ENCODE measurements at regions of chr2 and their contacts with region 1.

Region 1: GRCh38 chr2:99559075-99559662 is 69.4 kb upstream of the REV1 start:
- DNase-seq: peak; percentile 57
- ATAC-seq: peak; percentile 96
- H3K4me3 ChIP-seq: no peak overlapping the region
- H3K27ac ChIP-seq: no peak overlapping the region
- H3K4me1 ChIP-seq: no peaks in the 10 kb centered on the region
- H3K27me3 ChIP-seq: peaks cover 19% of the 10 kb centered on the region
- CTCF ChIP-seq: peak; percentile 97

Region 2: DNA sequence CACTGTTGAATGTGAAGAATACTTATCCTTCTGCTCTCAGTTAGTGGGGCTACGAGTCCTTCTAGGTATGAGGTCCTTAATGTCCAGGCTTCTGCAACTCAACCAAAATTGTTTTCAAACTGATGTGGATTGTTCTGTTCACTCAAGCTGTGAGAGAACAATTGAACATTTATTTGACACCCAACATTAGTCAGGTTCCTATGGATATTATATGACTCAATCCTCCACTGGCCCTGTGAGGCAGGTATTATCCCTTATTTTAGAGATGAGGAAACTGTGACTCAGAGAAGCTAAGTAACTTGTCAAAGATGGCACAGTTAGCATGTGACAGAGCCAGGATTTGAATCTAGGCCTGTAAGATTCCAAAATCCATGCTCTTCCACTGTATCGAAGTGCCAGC is 302.5 kb before region 1 on chr2:
- CTCF ChIA-PET with region 1: no interaction called
- POLR2A ChIA-PET with region 1: no interaction called
- in situ Hi-C with region 1: no loop called
- intact Hi-C with region 1: no loop called
- DNase-seq: no peak
- ATAC-seq: no peak
- H3K4me3 ChIP-seq: no peak overlapping the region
- H3K27ac ChIP-seq: no peak overlapping the region
- H3K4me1 ChIP-seq: no peaks in the 10 kb centered on the region
- H3K27me3 ChIP-seq: no peaks in the 10 kb centered on the region
- CTCF ChIP-seq: no peak

Region 3: DNA sequence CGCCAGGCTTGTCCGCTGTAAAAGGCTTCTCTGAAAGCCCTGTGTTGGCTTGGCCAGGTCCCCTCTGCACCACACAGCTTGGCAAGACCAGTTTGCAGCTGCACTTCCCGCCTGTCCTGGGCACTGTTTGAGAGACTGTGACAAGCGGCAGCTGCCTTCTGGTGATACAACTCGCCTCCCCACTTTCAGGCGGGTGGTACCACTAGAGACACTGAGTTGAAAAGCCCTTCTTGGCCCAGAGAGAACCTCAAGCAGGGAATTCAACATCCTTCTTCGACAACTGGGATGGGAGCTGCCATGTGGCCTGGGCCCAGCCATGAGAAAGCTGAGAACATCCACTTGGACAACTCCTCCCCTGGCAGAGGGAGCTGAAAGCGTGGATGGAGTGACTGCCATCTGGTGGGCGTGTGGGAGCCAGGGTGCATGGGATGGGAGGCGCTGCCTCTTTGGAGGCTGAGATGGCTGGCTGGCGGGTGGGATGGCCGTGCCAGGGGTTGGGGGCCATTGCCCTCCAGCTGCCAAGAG is 56.1 kb after region 1 on chr2:
- CTCF ChIA-PET with region 1: interaction called, 9 read pairs
- POLR2A ChIA-PET with region 1: no interaction called
- in situ Hi-C with region 1: no loop called
- intact Hi-C with region 1: loop called (anchors 5 kb)
- DNase-seq: no peak
- ATAC-seq: peak; percentile 77
- H3K4me3 ChIP-seq: no peak overlapping the region
- H3K27ac ChIP-seq: no peak overlapping the region
- H3K4me1 ChIP-seq: no peaks in the 10 kb centered on the region
- H3K27me3 ChIP-seq: no peaks in the 10 kb centered on the region; the same call in 1 of the 2 replicates
- CTCF ChIP-seq: peak; percentile 59

Region 4: GRCh38 chr2:99818842-99819241 is 259.7 kb after region 1 on chr2:
- CTCF ChIA-PET with region 1: interaction called, 17 read pairs
- POLR2A ChIA-PET with region 1: no interaction called
- in situ Hi-C with region 1: no loop called
- intact Hi-C with region 1: no loop called
- DNase-seq: no peak
- ATAC-seq: no peak
- H3K4me3 ChIP-seq: no peak overlapping the region
- H3K27ac ChIP-seq: no peak overlapping the region
- H3K4me1 ChIP-seq: no peaks in the 10 kb centered on the region
- H3K27me3 ChIP-seq: no peaks in the 10 kb centered on the region
- CTCF ChIP-seq: peak; percentile 4; the same call in 1 of the 2 replicates

Region 5: GRCh38 chr2:100242891-100243619 is 683.9 kb after region 1 on chr2:
- CTCF ChIA-PET with region 1: no interaction called
- POLR2A ChIA-PET with region 1: no interaction called
- in situ Hi-C with region 1: no loop called
- intact Hi-C with region 1: loop called (anchors 1 kb)
- DNase-seq: peak; percentile 39
- ATAC-seq: peak; percentile 87
- H3K4me3 ChIP-seq: no peak overlapping the region
- H3K27ac ChIP-seq: no peak overlapping the region
- H3K4me1 ChIP-seq: no peaks in the 10 kb centered on the region
- H3K27me3 ChIP-seq: no peaks in the 10 kb centered on the region; the same call in 1 of the 2 replicates
- CTCF ChIP-seq: peak; percentile 89

Region 6: DNA sequence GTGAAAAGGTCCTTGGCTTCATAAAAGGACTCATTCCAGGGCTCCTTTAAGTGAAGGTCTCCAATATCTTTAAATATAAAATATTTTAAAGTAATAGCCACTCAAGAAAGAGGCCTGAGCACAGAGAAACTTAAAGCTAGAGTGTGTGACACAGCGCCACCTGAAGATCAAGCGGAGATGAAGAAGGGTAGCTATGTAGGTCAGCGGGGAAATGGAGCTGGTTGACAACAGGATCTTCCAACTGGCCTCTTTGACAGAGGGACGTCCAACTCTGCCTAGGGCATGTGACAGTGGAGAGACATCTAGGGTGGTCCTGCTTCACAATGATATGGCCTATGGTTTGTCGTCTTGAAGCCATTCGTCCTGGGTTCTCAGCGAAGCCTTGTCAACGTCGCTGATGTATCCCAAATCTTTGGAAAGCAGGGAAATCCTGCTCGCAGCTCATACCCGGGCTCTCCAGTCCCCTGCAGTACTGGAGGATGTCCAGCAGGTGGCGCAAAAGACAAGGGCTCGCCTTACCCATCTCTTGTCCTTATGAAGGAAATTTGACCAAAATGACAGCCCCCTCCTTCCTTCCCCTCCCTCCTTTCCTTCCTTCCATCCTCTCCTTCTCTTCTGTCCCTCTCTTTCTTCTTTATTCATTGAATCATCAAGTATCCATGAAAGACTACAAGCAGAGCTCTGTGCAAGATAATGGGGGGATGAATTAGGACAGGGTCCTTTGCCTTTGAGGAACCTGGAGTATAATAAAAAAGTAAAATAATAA is 703.6 kb after region 1 on chr2:
- CTCF ChIA-PET with region 1: interaction called, 8 read pairs
- POLR2A ChIA-PET with region 1: no interaction called
- in situ Hi-C with region 1: no loop called
- intact Hi-C with region 1: loop called (anchors 5 kb)
- DNase-seq: peak; percentile 57
- ATAC-seq: peak; percentile 68
- H3K4me3 ChIP-seq: no peak overlapping the region
- H3K27ac ChIP-seq: no peak overlapping the region
- H3K4me1 ChIP-seq: peaks cover 7% of the 10 kb centered on the region
- H3K27me3 ChIP-seq: no peaks in the 10 kb centered on the region
- CTCF ChIP-seq: peak; percentile 96